ENCODE measurements at regions of chr5 and their contacts with region 1.

Region 1: DNA sequence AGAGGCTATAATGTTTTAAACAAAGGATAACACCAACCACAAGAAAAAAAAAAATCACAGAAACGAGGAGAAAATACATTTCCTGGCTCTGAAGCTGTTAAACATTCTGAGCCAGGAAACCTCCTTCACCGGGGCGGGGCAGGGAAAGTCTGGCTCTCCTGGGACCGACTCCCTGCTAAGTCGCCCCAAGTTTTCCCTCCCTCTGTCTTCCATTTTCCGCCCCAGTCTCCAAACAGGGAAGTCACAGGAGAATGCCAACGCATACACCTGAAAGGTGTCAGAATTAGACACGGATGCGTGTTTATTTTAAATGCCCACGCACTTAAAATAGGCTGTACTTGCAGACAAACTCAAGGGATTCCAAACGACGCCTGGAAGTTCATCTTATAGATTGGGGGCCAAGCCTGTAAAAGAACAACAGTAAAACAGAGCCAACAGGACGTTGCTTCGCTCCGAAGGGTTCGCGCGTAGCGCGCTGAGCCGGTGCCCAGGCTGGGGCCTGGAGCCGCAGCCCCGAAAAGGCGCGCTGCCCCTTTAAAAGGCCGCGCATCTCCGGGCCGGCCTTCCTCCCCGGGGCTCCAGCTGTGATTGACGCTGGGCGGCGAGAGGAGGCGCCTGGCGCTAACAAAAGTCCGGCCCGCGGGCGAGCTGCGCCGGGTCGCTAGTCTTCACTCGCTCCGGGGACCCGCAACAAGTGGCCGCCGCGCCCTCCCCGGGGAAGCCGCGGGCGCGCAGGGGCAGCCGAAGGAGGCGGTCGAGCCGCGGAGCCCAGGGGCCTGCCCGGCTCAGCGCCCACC is at the start of gene FBXL7:
- DNase-seq: peak; percentile 78
- H3K4me3 ChIP-seq: peak within 1 kb of the TSS; percentile 60 to 74
- H3K27ac ChIP-seq: peak within 1 kb of the TSS; percentile 60 to 78
- H3K4me1 ChIP-seq: no peaks in the 10 kb centered on the region
- H3K27me3 ChIP-seq: no peaks in the 10 kb centered on the region
- CTCF ChIP-seq: peak in 1 of 4 experiments; percentile 40
- POLR2A ChIP-seq: peak; percentile 54
- total RNA-seq, gene FBXL7: 21.2 to 24.2 TPM

Region 2: GRCh38 chr5:15116996-15117395 is 382.7 kb before region 1 on chr5:
- intact Hi-C with region 1: loop called (anchors 10 kb)
- DNase-seq: no peak
- H3K4me3 ChIP-seq: no peak overlapping the region
- H3K27ac ChIP-seq: no peak overlapping the region
- H3K4me1 ChIP-seq: no peaks in the 10 kb centered on the region
- H3K27me3 ChIP-seq: no peaks in the 10 kb centered on the region
- CTCF ChIP-seq: no peak
- POLR2A ChIP-seq: no peak

Region 3: GRCh38 chr5:15236911-15237508 is 262.7 kb before region 1 on chr5:
- intact Hi-C with region 1: loop called (anchors 5 kb)
- DNase-seq: no peak
- H3K4me3 ChIP-seq: no peak overlapping the region
- H3K27ac ChIP-seq: no peak overlapping the region
- H3K4me1 ChIP-seq: no peaks in the 10 kb centered on the region
- H3K27me3 ChIP-seq: no peaks in the 10 kb centered on the region
- CTCF ChIP-seq: no peak
- POLR2A ChIP-seq: no peak

Region 4: GRCh38 chr5:15260356-15261268 is 239.1 kb before region 1 on chr5:
- intact Hi-C with region 1: loop called (anchors 10 kb)
- DNase-seq: no peak
- H3K4me3 ChIP-seq: no peak overlapping the region
- H3K27ac ChIP-seq: no peak overlapping the region
- H3K4me1 ChIP-seq: no peaks in the 10 kb centered on the region
- H3K27me3 ChIP-seq: no peaks in the 10 kb centered on the region
- CTCF ChIP-seq: no peak
- POLR2A ChIP-seq: no peak

Region 5: DNA sequence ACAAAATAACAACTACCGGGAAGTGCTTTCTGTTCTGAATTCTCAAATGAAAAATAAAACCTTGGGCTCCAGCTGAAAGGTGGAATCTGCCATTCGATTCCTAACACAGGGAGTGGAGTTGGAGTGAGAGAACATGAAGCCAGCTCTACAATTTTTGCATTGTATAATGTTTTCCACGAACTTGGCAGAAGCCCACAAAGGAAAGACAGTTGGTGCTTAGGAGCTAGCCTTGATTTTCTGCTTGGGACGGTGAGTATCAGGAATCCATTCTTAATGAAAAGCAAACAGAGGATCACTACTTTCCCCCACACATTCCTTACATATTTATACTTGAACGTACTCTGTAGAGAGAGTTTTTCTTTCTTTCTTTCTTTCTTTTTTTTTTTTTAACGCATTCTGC is 74.0 kb before region 1 on chr5:
- intact Hi-C with region 1: loop called (anchors 5 kb)
- DNase-seq: no peak
- H3K4me3 ChIP-seq: peak overlapping the region in 1 of 2 donors; percentile 18
- H3K27ac ChIP-seq: no peak overlapping the region
- H3K4me1 ChIP-seq: no peaks in the 10 kb centered on the region
- H3K27me3 ChIP-seq: no peaks in the 10 kb centered on the region
- CTCF ChIP-seq: no peak
- POLR2A ChIP-seq: no peak

Region 6: GRCh38 chr5:15821506-15821905 is 321.8 kb after region 1 on chr5:
- intact Hi-C with region 1: loop called (anchors 5 kb)
- DNase-seq: no peak
- H3K4me3 ChIP-seq: no peak overlapping the region
- H3K27ac ChIP-seq: no peak overlapping the region
- H3K4me1 ChIP-seq: peaks cover 2% of the 10 kb centered on the region
- H3K27me3 ChIP-seq: no peaks in the 10 kb centered on the region
- CTCF ChIP-seq: no peak
- POLR2A ChIP-seq: no peak